ENCODE measurements at regions of chr5 and their contacts with region 1.

Region 1: DNA sequence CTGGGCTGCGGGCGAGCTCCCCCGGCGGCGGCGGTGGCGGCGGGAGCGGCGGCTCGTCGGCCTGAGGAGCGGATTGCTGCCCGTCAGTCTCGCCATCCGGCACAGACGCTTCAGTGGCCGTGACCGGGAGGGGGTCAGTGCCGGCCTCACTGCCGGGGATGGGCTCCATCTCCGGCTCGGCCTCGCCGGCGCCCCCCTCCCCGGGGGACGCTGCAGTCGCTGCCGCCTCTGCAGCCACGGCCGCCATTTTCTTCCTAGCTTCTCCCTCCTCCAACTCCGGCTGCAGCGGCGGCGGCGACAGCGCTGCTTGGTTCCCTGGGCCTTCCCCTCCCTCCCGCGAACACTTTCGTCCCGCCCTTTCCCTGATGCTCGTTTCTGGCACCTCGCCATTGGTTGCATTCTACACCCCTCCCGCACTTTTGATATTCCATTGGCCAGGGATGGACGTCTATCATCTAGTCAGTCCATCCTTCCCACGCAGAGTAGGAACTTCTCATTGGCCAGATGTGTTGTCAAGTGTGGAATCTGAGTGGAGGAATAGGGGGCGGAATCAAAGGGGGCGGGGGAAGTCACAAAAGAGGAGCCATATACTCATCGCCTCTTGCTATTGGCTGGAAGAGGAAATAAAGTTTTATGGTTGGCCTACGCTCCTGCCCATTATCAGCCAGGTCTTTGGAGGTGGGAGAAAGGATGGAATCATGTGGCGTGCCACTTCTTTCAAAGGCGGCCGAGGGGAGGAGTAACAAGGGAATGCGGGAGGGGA is at the start of gene PWWP2A:
- DNase-seq: peak; percentile 81
- ATAC-seq: peak; percentile 92
- H3K4me3 Mint-ChIP-seq: peak within 1 kb of the TSS; percentile 95
- H3K27ac Mint-ChIP-seq: peak within 1 kb of the TSS; percentile 92
- H3K4me1 Mint-ChIP-seq: peaks cover 17% of the 10 kb centered on the region
- H3K27me3 Mint-ChIP-seq: peaks cover 6% of the 10 kb centered on the region
- CTCF ChIP-seq: no peak
- total RNA-seq, gene PWWP2A: 25.8 and 33.0 TPM in 2 replicates

Region 2: GRCh38 chr5:160008877-160009590 is 110.3 kb before region 1 on chr5 and contains the start of gene TTC1:
- CTCF ChIA-PET with region 1: no interaction called
- POLR2A ChIA-PET with region 1: interaction called, 4 read pairs
- intact Hi-C with region 1: loop called (anchors 1 kb)
- DNase-seq: peak; percentile 72
- ATAC-seq: peak; percentile 98
- H3K4me3 Mint-ChIP-seq: peak within 1 kb of the TSS; percentile 100
- H3K27ac Mint-ChIP-seq: peak within 1 kb of the TSS; percentile 98
- H3K4me1 Mint-ChIP-seq: peaks cover 31% of the 10 kb centered on the region
- H3K27me3 Mint-ChIP-seq: no peaks in the 10 kb centered on the region
- CTCF ChIP-seq: no peak
- total RNA-seq, gene TTC1: 59.9 and 65.0 TPM in 2 replicates

Region 3: GRCh38 chr5:160105686-160106360 is 13.5 kb before region 1 on chr5:
- CTCF ChIA-PET with region 1: no interaction called
- POLR2A ChIA-PET with region 1: interaction called, 5 read pairs
- intact Hi-C with region 1: loop called (anchors 1 kb)
- DNase-seq: no peak
- ATAC-seq: peak; percentile 45
- H3K4me3 Mint-ChIP-seq: no peak overlapping the region
- H3K27ac Mint-ChIP-seq: no peak overlapping the region
- H3K4me1 Mint-ChIP-seq: peaks cover 28% of the 10 kb centered on the region
- H3K27me3 Mint-ChIP-seq: no peaks in the 10 kb centered on the region
- CTCF ChIP-seq: no peak

Region 4: DNA sequence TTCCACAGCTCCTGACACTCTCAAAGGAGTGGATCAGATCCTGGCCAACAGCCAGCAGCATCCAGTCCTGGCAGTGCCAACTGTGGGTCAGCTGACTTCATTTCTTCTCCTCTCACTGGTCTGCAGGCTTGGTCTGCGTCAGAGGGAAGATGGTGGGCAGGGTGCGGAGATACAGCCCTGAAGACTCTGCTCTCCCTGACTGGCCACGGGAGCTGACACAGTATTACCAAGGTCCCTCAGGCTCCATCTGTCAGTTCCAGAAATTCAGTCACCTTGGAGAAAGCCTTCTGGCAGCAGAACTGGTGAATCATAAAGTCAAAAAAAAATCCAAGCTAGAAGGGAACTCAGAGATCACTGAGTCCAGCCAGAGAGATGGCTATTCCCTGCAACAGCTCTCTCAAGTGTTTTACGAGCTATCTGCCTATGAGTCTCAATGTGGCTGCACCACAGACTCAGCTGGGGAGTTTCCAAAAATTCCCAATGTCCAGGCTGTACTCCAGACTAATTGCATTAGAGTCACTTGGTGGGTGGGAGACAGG is 223.1 kb after region 1 on chr5:
- CTCF ChIA-PET with region 1: no interaction called
- POLR2A ChIA-PET with region 1: no interaction called
- intact Hi-C with region 1: loop called (anchors 1 kb)
- DNase-seq: no peak
- ATAC-seq: no peak
- H3K4me3 Mint-ChIP-seq: no peak overlapping the region
- H3K27ac Mint-ChIP-seq: no peak overlapping the region
- H3K4me1 Mint-ChIP-seq: no peaks in the 10 kb centered on the region
- H3K27me3 Mint-ChIP-seq: no peaks in the 10 kb centered on the region
- CTCF ChIP-seq: no peak

Region 5: GRCh38 chr5:160418561-160419457 is 299.5 kb after region 1 on chr5 and contains the start of gene SLU7:
- CTCF ChIA-PET with region 1: no interaction called
- POLR2A ChIA-PET with region 1: interaction called, 5 read pairs
- intact Hi-C with region 1: loop called (anchors 1 kb)
- DNase-seq: peak; percentile 88
- ATAC-seq: peak; percentile 81
- H3K4me3 Mint-ChIP-seq: peak within 1 kb of the TSS; percentile 91
- H3K27ac Mint-ChIP-seq: peak within 1 kb of the TSS; percentile 90
- H3K4me1 Mint-ChIP-seq: peaks cover 72% of the 10 kb centered on the region
- H3K27me3 Mint-ChIP-seq: no peaks in the 10 kb centered on the region
- CTCF ChIP-seq: no peak
- total RNA-seq, gene SLU7: 58.5 and 59.3 TPM in 2 replicates

Region 6: GRCh38 chr5:160601046-160601445 is 481.7 kb after region 1 on chr5:
- CTCF ChIA-PET with region 1: no interaction called
- POLR2A ChIA-PET with region 1: no interaction called
- intact Hi-C with region 1: no loop called
- DNase-seq: no peak
- ATAC-seq: no peak
- H3K4me3 Mint-ChIP-seq: no peak overlapping the region
- H3K27ac Mint-ChIP-seq: no peak overlapping the region
- H3K4me1 Mint-ChIP-seq: no peaks in the 10 kb centered on the region
- H3K27me3 Mint-ChIP-seq: no peaks in the 10 kb centered on the region
- CTCF ChIP-seq: no peak